ENCODE measurements at regions of chr2 and their contacts with region 1.

Region 1: DNA sequence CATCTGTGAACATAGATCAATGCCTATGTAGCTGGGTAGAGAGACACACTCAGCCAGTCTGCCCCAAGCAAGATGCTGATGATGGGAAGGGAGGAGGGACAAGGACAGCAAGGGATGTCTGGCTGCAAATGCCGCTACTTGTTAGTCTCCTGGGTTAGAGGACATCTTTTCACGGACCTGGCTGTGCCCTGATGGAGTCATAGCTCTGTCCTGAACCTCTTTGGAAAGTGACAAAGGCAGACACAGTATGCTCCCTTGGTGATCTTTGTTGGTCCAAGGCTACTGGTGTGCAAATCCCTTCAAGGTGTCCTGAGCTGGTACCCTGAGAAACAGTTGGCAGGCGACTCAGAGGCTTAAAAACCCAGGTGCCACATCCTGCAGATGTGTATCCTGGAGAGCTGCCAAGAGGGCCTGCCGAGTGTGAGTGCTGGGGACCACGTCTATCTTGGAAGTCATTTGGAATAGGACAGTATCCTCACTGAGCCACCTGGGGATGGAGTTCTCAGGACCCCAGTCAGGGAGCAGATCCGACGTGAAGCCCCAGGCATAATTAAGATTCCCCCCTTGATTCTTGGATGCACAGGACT is 10.8 kb downstream of the FOSL2 start:
- DNase-seq: no peak
- H3K4me3 ChIP-seq: no peak overlapping the region
- H3K27ac ChIP-seq: no peak overlapping the region
- H3K4me1 ChIP-seq: peaks cover 5% of the 10 kb centered on the region
- H3K27me3 ChIP-seq: no peaks in the 10 kb centered on the region
- CTCF ChIP-seq: no peak
- POLR2A ChIP-seq: no peak

Region 2: DNA sequence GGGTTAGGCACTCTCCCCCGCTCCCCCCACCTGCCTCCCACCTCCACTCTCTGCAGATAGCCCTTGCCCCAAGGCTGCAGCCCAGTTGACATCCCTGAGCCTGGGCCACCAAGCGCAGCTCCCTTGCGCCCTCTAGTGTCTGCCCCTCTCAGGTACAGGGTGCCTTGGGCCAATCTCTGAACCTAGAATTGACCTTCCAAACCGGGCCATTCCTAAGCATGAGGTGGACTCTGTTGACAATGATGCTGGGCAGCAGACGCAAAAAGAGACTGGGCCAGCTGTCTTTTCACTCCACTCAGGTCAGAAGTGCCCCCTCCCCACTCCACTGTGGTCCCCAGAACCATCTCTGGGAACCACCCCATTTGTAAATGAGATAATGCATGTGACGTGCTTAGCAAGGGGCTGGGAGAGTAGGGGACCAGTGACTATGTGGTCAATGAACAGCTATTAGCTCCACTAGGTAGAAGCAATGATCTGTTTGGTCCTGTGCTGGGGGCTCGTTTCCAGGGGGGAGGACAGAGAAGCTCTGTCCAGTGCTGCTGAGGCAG is 49.1 kb after region 1 on chr2:
- intact Hi-C with region 1: loop called (anchors 5 kb)
- DNase-seq: peak; percentile 58
- H3K4me3 ChIP-seq: no peak overlapping the region
- H3K27ac ChIP-seq: no peak overlapping the region
- H3K4me1 ChIP-seq: no peaks in the 10 kb centered on the region
- H3K27me3 ChIP-seq: no peaks in the 10 kb centered on the region
- CTCF ChIP-seq: peak; percentile 81 to 90 (median 86)
- POLR2A ChIP-seq: no peak